ENCODE measurements at regions of chr1 and their contacts with region 1.

Region 1: DNA sequence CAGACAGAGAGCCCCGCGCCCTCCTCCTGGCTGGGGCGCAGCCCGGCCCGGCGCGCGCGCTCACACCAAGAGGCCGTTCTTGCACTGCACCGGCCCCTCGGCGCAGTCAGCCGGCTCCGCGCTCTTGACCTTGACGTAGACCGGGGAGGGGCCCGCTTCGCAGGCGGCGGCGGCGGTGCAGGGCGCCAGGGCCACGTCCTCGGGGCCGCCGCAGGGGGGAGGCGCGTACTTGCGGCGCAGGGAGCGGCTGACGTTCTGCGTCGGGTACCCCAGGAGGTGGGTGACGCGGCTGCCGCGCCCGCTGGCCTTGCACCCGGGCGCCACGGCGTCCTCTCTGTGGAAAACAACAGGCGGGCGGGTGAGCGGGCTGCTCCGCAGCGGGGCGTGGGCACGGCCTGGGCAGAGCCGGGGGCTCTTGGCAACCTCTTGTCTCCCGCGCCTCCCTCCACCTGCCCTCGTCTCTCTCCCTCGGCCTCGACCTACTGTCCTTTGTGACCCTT is 7.7 kb downstream of the VSIG8 start:
- DNase-seq: peak; percentile 62
- H3K4me3 ChIP-seq: peak overlapping the region; percentile 52 to 64
- H3K27ac ChIP-seq: peak overlapping the region; percentile 84 to 87
- H3K4me1 ChIP-seq: no peaks in the 10 kb centered on the region
- H3K27me3 ChIP-seq: no peaks in the 10 kb centered on the region
- CTCF ChIP-seq: peak in 2 of 4 experiments; percentile 22 to 38
- POLR2A ChIP-seq: peak; percentile 82

Region 2: DNA sequence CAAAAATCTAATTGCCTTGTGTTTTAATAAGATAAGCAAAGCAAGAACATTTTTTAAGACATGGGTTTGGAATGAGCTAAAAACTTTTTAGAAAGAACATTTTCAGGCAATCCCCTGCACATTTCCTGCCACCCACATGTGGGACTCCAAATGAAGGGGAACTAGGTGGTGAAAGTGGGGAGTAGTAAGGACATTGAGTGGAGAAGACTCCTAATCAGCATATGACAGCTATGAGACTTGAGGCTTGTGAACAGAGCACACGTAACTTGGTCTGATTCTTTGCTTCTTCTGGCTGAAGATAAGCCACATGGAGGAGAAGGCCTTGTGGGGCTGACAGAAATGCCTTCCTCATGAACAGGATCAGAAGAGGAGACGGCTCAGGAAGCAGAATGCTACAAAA is 502.3 kb before region 1 on chr1:
- intact Hi-C with region 1: no loop called
- DNase-seq: no peak
- H3K4me3 ChIP-seq: no peak overlapping the region
- H3K27ac ChIP-seq: no peak overlapping the region
- H3K4me1 ChIP-seq: no peaks in the 10 kb centered on the region
- H3K27me3 ChIP-seq: no peaks in the 10 kb centered on the region
- CTCF ChIP-seq: no peak
- POLR2A ChIP-seq: no peak

Region 3: DNA sequence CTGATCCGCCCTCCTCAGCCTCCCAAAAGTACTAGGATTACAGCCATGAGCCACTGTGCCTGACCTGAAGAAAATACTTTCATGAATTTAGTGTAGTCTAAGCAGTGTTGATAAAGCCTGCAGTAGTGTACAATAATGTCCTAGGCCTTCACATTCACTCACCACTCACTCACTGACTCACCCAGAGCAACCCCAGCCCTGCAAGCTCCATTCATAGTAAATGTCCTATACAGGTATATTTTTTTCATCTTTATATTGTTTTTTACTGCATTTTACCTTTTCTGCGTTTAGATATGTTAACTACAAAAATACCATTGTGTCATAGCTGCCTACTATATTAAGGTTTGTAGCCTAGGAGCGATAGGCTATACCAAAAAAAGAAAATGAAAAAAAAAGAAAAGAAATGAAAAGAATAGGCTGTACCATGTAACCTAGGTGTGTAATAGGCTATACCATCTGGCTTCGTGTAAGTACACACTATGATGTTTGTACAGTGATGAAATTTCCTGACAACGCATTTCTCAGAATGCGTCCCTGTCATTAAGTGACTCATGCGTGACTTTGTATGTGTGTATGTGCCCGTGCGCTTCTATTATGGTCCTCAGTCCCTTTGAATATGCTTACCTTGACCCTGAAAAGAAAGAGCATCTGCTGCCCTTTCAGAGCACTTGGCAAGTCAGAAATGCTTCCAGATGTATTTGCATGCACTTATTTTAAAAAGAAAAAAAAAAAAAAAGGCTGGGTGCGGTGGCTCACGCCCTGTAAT is 37.3 kb before region 1 on chr1:
- intact Hi-C with region 1: no loop called
- DNase-seq: no peak
- H3K4me3 ChIP-seq: no peak overlapping the region
- H3K27ac ChIP-seq: no peak overlapping the region
- H3K4me1 ChIP-seq: no peaks in the 10 kb centered on the region
- H3K27me3 ChIP-seq: no peaks in the 10 kb centered on the region
- CTCF ChIP-seq: no peak
- POLR2A ChIP-seq: no peak

Region 4: DNA sequence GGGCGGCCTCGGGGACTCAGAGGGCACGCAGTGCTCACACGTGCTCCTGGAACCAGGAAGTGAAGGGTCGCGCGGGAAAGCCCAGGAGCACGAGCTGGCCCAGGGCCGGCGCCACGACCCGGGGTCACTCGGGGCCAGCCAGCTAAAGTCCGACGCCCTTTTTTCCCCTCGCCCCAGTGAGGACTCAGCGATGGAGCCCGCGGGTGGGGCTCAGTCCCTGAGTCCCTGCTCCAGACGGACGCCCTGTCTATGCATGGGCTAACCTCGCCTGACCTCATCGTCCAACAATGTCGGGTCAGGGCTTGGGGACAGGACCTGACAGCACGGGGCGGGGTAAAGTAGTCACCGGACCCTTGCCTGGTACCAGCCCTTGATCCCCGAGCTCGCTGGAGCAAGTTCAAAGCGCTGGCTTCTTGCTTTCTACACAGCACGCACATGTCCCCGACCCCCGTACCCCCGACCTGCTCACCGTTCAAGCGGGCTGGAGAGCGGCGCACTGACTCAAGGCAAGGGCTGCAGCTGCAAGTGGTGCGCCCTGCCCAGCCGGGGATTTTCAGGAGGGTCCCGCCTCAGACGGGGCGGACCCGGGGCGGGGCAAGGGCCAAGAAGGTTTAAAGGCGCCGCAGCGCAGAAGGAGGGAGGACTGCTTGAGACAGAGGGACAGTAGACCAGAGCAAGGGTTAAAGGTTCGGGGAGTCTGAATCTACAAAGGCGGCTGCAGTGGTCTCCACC is 70.4 kb after region 1 on chr1 and contains the start of gene TAGLN2:
- intact Hi-C with region 1: loop called (anchors 10 kb)
- DNase-seq: peak; percentile 90
- H3K4me3 ChIP-seq: peak within 1 kb of the TSS; percentile 53 to 66
- H3K27ac ChIP-seq: peak within 1 kb of the TSS; percentile 72 to 84
- H3K4me1 ChIP-seq: peaks cover 17% of the 10 kb centered on the region
- H3K27me3 ChIP-seq: no peaks in the 10 kb centered on the region
- CTCF ChIP-seq: peak in 1 of 4 experiments; percentile 7
- POLR2A ChIP-seq: peak; percentile 96
- total RNA-seq, gene TAGLN2: 97.1 to 386 TPM

Region 5: DNA sequence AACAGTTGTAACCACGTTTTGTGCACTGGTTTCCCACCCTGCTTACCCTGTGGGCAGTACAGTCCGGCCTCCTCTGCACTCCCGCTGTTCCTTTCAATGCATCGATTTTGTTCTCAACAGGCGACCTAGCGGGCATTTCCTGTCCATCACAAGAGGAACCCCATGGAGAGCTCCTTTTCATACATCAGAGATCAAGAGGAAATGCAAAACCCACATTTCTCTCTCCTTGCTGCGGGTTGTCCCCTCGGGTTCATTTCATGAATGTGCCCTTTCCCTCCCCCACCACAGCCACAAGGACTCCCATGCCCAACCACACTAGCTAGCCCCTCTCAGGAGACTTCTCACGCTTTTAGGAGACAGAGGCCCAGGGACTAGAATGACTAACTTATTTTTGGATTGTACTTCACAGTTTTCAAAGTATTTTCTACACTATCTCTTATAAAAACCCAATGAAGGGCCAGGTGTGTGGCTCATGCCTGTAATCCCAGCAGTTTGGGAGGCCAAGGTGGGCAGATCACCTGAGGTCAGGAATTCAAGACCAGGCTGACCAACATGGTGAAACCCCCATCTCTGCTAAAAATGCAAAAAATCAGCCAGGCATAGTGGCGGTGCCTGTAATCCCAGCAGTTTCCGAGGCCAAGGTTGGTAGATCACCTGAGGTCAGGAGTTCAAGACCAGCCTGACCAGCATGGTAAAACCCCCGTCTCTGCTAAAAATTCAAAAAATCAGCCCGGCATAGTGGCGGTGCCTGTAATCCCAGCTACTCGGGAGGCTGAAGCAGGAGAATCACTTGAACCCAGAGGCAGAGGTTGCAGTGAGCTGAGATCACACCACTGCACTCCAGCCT is 315.0 kb after region 1 on chr1:
- intact Hi-C with region 1: no loop called
- DNase-seq: no peak
- H3K4me3 ChIP-seq: no peak overlapping the region
- H3K27ac ChIP-seq: no peak overlapping the region
- H3K4me1 ChIP-seq: no peaks in the 10 kb centered on the region
- H3K27me3 ChIP-seq: no peaks in the 10 kb centered on the region
- CTCF ChIP-seq: no peak
- POLR2A ChIP-seq: no peak